Activated CD8-positive, alpha-beta memory T cell treated with anti-CD3 and anti-CD28 coated beads, Interleukin-2, amount 10 ng/mL, durations not matched to agents 7 days and 5 days (primary cell): ENCODE measurements at regions of chr19 and their contacts with region 1.

Region 1: GRCh38 chr19:19488875-19489690 is 26.3 kb downstream of the TSSK6 start:
- DNase-seq: peak; percentile 99
- ATAC-seq: peak; percentile 87
- H3K4me3 Mint-ChIP-seq: peak overlapping the region; percentile 43
- H3K27ac Mint-ChIP-seq: peak overlapping the region; percentile 95
- H3K4me1 Mint-ChIP-seq: peaks cover 44% of the 10 kb centered on the region
- H3K27me3 Mint-ChIP-seq: no peaks in the 10 kb centered on the region

Region 2: DNA sequence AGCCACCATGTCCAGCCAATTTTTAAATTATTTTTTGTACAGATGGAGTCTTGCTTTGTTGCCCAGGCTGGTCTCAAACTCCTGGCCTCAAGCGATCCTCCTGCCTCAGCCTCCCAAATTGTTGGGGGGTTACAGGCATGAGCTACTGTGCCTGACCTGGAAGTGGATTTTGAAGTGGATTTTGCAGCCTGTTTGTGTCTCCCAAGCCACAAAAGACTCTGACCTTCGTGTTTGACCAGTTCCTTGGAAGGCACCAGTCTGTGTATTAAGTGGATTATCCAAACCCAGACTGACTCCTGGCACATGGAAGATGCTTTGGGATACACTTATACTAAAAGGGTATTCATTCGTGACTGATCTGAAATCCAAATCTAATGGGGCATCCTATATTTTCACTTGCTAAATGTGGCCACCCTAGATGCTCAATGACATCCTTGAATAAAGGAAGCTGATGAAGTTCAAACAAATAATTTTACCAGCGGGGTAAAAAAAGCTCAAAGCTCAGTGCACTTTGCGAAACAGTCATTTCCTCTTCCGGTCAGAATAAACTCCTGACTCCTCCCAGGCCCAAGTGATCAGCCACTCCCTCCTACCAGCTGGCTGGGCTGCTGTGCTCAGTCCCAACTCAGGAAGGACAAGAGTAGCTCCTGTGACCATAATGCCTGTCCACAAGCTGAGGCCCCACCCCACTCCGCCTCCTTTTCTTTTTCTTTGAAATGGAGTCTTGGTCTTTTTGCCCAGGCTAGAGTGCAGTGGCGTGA is 116.2 kb before region 1 on chr19:
- CTCF ChIA-PET with region 1: interaction called, 24 read pairs
- DNase-seq: peak; percentile 79
- ATAC-seq: peak; percentile 99
- H3K4me3 Mint-ChIP-seq: peak overlapping the region; percentile 23
- H3K27ac Mint-ChIP-seq: peak overlapping the region; percentile 94
- H3K4me1 Mint-ChIP-seq: peaks cover 11% of the 10 kb centered on the region
- H3K27me3 Mint-ChIP-seq: no peaks in the 10 kb centered on the region

Region 3: DNA sequence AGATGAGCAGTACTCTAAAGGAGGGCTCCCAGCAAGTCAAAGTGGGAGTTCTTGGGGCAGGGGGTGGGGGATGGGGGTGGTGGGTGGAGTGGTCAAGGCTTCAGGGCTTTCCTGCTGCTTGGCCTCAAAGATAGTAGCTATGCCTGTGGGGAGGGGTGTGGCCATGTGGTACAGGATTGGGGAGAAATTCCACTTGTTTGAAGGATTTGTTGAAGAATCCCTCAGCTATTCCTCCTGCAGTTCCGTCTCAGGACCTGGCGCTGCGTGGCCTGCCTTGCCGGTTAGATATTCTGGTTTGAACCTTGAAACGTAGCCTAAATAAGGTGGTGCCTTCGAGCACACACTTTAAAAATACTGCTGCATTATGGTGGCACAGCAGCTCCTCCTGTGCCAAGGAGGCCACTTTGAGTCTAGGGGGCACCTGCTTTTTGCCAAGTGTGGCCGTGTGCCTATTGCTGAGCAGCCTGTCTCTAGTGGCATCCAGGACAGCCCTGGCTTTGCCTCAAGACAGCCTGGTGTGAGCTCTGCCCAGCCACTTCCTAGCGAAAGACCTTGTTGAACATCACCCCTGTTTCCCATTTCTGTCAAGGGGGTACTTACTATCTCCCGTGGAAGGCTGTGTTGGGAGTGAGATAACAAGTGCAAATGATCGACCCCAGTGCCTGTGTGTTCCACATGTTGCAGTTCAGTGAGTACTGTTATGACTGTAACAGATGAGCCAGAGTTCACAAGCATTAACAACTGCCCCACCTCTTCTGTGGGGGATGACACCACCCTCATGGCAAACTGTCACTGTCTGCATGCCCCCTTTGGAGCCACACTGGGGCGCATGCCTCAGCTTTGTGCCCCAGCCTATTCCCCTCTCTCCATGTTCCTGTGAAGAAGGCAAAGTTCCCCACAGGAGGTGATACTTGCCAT is 78.5 kb before region 1 on chr19:
- CTCF ChIA-PET with region 1: interaction called, 62 read pairs
- DNase-seq: peak; percentile 67
- ATAC-seq: peak; percentile 48
- H3K4me3 Mint-ChIP-seq: no peak overlapping the region
- H3K27ac Mint-ChIP-seq: peak overlapping the region; percentile 77
- H3K4me1 Mint-ChIP-seq: peaks cover 70% of the 10 kb centered on the region
- H3K27me3 Mint-ChIP-seq: no peaks in the 10 kb centered on the region

Region 4: DNA sequence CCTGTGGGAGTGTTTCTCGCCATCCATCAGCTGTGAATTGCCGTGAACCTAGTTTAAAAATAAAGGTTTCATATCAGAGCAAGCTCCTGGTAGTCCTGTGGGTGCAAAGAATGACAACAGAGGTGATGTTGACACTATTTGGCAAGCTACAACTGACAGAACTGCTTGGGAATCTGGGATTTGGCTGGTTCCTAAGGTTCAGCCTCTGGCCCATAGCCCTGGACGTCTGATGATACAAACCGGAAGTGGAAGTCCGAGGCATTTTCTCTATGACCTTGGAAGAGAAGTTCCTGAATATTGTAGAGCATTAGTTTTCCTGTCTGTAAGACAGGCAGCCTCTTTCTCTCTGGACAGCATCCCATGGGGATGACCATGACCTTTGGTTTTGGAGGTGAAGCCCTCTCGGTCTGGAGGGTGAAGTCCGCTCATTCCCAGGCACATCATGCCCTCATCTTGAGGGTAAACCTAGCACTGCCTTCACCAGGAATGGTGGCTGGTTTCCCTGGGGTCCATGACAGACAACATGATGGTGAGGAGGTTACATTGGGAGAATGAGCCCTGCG is 54.5 kb before region 1 on chr19:
- CTCF ChIA-PET with region 1: no interaction called
- DNase-seq: no peak
- ATAC-seq: no peak
- H3K4me3 Mint-ChIP-seq: no peak overlapping the region
- H3K27ac Mint-ChIP-seq: peak overlapping the region; percentile 23
- H3K4me1 Mint-ChIP-seq: peaks cover 30% of the 10 kb centered on the region
- H3K27me3 Mint-ChIP-seq: no peaks in the 10 kb centered on the region

Region 5: DNA sequence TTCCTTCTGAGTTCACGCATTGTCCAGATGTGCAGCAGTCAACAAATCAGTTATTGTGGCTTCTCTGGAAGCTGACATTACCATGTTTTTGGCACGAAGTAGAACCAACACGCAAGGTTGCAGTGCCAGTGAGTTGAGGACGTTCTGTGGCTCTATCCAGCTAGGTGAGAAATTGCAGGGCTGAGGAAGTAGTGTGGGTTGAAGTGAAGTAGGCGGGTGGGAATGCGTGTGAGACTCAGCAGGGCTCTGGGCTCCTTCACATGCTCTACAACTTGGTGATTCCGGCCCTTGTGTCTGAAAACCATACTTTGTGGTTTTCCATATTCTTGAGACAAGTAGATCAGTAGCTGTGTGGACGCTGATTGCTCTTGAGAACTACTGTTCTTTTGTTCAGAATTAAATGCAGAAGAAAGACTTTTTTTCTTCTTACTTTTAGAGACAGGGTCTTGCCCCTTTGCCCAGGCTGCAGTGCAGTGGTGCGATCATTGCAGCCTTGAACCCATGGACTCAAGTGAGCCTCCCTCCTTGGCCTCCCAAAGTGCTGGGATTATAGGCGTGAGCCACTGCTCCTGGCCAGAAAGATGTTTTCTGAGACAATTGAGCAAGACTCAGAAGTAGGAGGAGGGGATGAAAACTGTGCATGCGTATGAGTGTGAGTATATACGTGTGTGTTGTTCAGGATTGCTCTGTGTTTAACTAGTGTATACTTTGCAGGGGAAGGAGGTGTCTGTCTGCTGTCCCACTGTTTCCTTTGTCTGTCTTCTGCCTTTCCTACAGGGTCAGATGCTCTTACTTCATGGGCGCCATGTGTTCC is 37.4 kb before region 1 on chr19:
- CTCF ChIA-PET with region 1: interaction called, 36 read pairs
- DNase-seq: peak; percentile 68
- ATAC-seq: peak; percentile 74
- H3K4me3 Mint-ChIP-seq: peak overlapping the region; percentile 13
- H3K27ac Mint-ChIP-seq: peak overlapping the region; percentile 66
- H3K4me1 Mint-ChIP-seq: peaks cover 62% of the 10 kb centered on the region
- H3K27me3 Mint-ChIP-seq: no peaks in the 10 kb centered on the region

Region 6: GRCh38 chr19:19468424-19469050 is 20.5 kb before region 1 on chr19:
- CTCF ChIA-PET with region 1: interaction called, 19 read pairs
- DNase-seq: no peak
- ATAC-seq: no peak
- H3K4me3 Mint-ChIP-seq: no peak overlapping the region
- H3K27ac Mint-ChIP-seq: peak overlapping the region; percentile 36
- H3K4me1 Mint-ChIP-seq: peaks cover 53% of the 10 kb centered on the region
- H3K27me3 Mint-ChIP-seq: no peaks in the 10 kb centered on the region

Region 7: DNA sequence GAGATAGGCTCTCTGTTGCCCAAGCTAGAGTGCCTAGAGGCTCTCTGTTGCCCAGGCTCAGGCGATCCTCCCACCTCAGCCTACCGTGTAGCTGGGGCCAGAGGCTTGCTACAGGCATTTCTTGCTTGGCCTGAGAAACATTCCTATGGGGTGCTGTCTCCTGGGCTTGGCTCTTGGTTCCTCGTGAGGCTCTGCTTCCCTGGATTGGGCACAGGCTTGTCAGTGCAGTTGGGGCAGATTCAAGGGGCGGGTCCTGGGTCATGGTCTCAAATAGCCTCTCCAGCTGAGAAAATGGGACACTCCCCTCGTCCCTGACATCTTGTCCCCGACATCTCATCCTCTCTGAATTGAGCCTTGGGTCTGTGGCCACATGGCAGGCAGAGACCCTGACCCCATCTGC is 21.3 kb after region 1 on chr19:
- CTCF ChIA-PET with region 1: interaction called, 12 read pairs
- DNase-seq: no peak
- ATAC-seq: no peak
- H3K4me3 Mint-ChIP-seq: no peak overlapping the region
- H3K27ac Mint-ChIP-seq: no peak overlapping the region
- H3K4me1 Mint-ChIP-seq: peaks cover under 1% of the 10 kb centered on the region
- H3K27me3 Mint-ChIP-seq: no peaks in the 10 kb centered on the region

Region 8: GRCh38 chr19:19559931-19560330 is 70.8 kb after region 1 on chr19:
- CTCF ChIA-PET with region 1: no interaction called
- DNase-seq: no peak
- ATAC-seq: no peak
- H3K4me3 Mint-ChIP-seq: no peak overlapping the region
- H3K27ac Mint-ChIP-seq: no peak overlapping the region
- H3K4me1 Mint-ChIP-seq: no peaks in the 10 kb centered on the region
- H3K27me3 Mint-ChIP-seq: no peaks in the 10 kb centered on the region

Region 9: GRCh38 chr19:19704836-19705235 is 215.8 kb after region 1 on chr19:
- CTCF ChIA-PET with region 1: no interaction called
- DNase-seq: no peak
- ATAC-seq: no peak
- H3K4me3 Mint-ChIP-seq: no peak overlapping the region
- H3K27ac Mint-ChIP-seq: no peak overlapping the region
- H3K4me1 Mint-ChIP-seq: no peaks in the 10 kb centered on the region
- H3K27me3 Mint-ChIP-seq: no peaks in the 10 kb centered on the region